Heart right ventricle (tissue), 16 donors: ENCODE measurements at regions of chr7 and their contacts with region 1.

Region 1: GRCh38 chr7:130356121-130356875 is 11.7 kb downstream of the CPA5 start:
- DNase-seq: peak; percentile 38 to 68
- ATAC-seq: peak; percentile 48 to 86 (median 71)
- H3K4me3 ChIP-seq: no peak overlapping the region
- H3K27ac ChIP-seq: peak overlapping the region in 9 of 10 donors; percentile 18 to 88 (median 77)
- H3K4me1 ChIP-seq: peaks cover 0 to 36% (median 22%) of the 10 kb centered on the region in 9 donors
- H3K27me3 ChIP-seq: no peaks in the 10 kb centered on the region
- CTCF ChIP-seq: no peak

Region 2: DNA sequence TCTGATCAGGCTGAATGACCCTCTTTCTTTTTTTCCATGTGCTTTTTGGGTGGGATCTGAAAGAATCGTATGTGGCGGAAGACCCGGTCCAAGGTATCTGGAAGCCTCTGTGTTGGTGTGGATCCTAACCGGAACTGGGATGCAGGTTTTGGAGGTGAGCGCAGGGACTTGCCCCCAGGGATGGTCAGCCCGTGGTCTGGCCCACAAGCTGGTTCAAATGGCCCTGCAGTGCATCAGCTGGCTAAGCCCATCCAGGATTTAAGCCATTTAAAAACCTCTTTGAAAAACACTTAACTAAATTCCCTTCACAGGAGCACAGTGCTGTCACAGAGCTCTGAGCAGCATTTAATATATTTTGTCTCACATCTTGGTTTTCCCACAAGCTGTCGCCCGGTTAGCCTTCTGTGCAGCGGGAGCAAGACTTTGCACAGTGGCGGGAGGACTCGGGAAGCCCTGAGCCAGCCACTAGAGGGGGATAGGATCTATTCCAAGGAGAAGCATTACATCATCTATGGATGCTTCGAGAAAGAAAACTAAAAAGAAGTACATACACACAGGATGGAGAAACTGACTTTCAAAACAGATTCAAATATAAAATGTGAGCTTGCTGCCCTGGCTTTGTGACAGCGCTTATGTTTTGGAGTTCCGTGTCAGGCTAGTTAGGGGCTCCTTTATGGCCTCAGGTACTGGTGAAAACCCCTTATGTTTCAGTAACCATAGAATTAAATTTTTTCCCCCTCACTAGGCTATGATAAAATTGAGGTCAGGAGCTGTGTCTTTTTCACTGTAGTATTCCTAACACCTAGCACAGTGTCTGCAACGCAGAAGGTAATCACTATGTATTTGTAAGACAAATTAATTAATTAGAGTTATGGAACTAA is 78.3 kb before region 1 on chr7:
- intact Hi-C with region 1: loop called in 2 of 10 experiments (anchors 5 to 10 kb)
- DNase-seq: peak; percentile 38 to 65
- ATAC-seq: peak; percentile 69 to 89 (median 80)
- H3K4me3 ChIP-seq: no peak overlapping the region
- H3K27ac ChIP-seq: no peak overlapping the region
- H3K4me1 ChIP-seq: peaks cover 0 to 27% (median 3%) of the 10 kb centered on the region in 9 donors
- H3K27me3 ChIP-seq: peaks cover 0 to 28% (median 16%) of the 10 kb centered on the region in 7 donors
- CTCF ChIP-seq: peak; percentile 23 to 79 (median 65)